Heart left ventricle (tissue), 16 donors: ENCODE measurements at regions of chr1 and their contacts with region 1.

Region 1: GRCh38 chr1:7743346-7743745 is 27.8 kb upstream of the VAMP3 start:
- DNase-seq: no peak
- ATAC-seq: no peak
- H3K4me3 ChIP-seq: no peak overlapping the region
- H3K27ac ChIP-seq: no peak overlapping the region
- H3K4me1 ChIP-seq: no peaks in the 10 kb centered on the region
- H3K27me3 ChIP-seq: no peaks in the 10 kb centered on the region
- CTCF ChIP-seq: no peak
- POLR2A ChIP-seq: no peak

Region 2: GRCh38 chr1:7469255-7469938 is 273.9 kb before region 1 on chr1:
- intact Hi-C with region 1: no loop called
- DNase-seq: no peak
- ATAC-seq: no peak
- H3K4me3 ChIP-seq: no peak overlapping the region
- H3K27ac ChIP-seq: no peak overlapping the region
- H3K4me1 ChIP-seq: peaks cover 0 to 14% (median 7%) of the 10 kb centered on the region in 12 donors
- H3K27me3 ChIP-seq: no peaks in the 10 kb centered on the region
- CTCF ChIP-seq: no peak
- POLR2A ChIP-seq: no peak

Region 3: DNA sequence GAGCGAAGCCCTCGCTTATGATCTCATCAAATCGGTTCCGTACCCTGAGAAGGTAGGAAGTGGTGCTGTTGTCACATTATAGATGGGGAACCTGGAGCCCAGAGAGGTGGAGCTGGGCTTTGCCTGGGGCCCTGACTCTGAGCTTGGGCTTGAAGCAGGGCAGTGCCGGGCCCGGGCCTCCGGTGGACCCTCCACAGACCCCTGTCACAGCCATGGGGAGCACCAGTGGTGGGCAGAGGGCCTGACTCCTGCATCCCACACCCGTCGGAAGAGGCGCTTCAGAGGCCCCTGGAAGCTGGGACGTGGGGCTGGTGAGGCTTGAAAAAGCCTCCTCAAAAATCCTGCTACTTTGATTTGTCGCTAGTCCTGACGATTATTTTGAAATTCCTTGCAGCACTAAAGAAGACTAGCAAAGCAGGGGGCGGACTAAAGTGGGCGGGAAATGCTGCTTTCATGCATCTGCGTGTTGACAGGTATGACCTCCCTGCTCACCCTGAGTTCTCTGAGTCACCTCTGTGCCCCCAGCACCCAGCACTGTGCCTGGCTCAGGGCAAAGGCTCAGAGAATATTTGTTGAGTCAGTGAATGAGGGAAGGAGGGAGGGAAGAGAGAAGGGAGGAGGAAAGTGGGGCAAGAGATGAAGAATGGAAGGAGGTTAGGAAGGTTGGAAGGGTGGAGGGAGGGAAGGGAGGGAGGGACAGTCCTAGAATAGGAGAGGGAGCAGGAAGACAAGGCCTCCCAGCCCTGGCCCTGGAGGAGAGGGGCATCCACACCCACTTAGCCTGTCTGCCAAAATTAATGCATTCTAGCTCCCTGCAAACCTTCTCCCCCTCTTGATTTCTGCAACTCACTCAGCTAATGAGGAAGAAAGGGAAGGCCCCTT is 235.1 kb before region 1 on chr1:
- intact Hi-C with region 1: no loop called
- DNase-seq: peak in 2 of 5 donors; percentile 16 to 48
- ATAC-seq: no peak
- H3K4me3 ChIP-seq: no peak overlapping the region
- H3K27ac ChIP-seq: peak overlapping the region in 1 of 12 donors; percentile 52
- H3K4me1 ChIP-seq: peaks cover 0 to 17% (median 2%) of the 10 kb centered on the region in 12 donors
- H3K27me3 ChIP-seq: no peaks in the 10 kb centered on the region
- CTCF ChIP-seq: no peak
- POLR2A ChIP-seq: no peak

Region 4: DNA sequence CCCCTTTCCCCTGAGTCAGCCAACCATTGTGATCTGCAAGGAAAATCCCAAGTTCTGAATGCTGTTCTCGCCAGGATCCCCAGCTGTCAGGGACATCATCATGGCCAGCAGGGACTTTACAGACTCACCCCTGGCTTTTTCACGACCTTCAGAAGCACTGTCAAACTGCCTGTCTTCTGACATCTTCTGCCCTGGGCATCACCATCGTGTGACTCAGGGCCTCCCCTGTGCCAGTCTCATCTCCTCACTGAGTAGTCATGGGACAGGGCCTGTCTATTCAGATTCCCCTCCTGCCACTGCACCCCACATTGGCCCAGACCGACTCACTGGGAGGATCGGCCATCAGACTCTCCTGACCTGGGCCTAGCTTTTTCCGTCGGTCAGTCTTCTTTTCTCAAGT is 44.7 kb before region 1 on chr1:
- intact Hi-C with region 1: loop called in 1 of 10 experiments (anchors 5 kb)
- DNase-seq: no peak
- ATAC-seq: no peak
- H3K4me3 ChIP-seq: no peak overlapping the region
- H3K27ac ChIP-seq: no peak overlapping the region
- H3K4me1 ChIP-seq: peaks cover 0 to 16% (median 0%) of the 10 kb centered on the region in 12 donors
- H3K27me3 ChIP-seq: peaks cover 0 to 6% (median 0%) of the 10 kb centered on the region in 9 donors
- CTCF ChIP-seq: no peak
- POLR2A ChIP-seq: no peak

Region 5: GRCh38 chr1:7795406-7795805 is 52.1 kb after region 1 on chr1:
- intact Hi-C with region 1: no loop called
- DNase-seq: no peak
- ATAC-seq: no peak
- H3K4me3 ChIP-seq: no peak overlapping the region
- H3K27ac ChIP-seq: no peak overlapping the region
- H3K4me1 ChIP-seq: no peaks in the 10 kb centered on the region
- H3K27me3 ChIP-seq: no peaks in the 10 kb centered on the region
- CTCF ChIP-seq: no peak
- POLR2A ChIP-seq: no peak